Activated T-helper 2 cell treated with anti-CD3 and anti-CD28 coated beads, Interferon-gamma antibody, Interleukin-2, Interleukin-4, amounts not matched to agents 10 μg/mL and 5 μg/mL and 100 μg/mL, durations not matched to agents 14 hours and 24 hours and 36 hours (primary cell): ENCODE measurements at regions of chr13 and their contacts with region 1.

Region 1: GRCh38 chr13:100363874-100364273 is 224.7 kb downstream of the GGACT start:
- DNase-seq: no peak
- H3K4me3 Mint-ChIP-seq: no peak overlapping the region
- H3K27ac Mint-ChIP-seq: no peak overlapping the region
- H3K4me1 Mint-ChIP-seq: peaks cover 14% of the 10 kb centered on the region
- H3K27me3 Mint-ChIP-seq: no peaks in the 10 kb centered on the region

Region 2: DNA sequence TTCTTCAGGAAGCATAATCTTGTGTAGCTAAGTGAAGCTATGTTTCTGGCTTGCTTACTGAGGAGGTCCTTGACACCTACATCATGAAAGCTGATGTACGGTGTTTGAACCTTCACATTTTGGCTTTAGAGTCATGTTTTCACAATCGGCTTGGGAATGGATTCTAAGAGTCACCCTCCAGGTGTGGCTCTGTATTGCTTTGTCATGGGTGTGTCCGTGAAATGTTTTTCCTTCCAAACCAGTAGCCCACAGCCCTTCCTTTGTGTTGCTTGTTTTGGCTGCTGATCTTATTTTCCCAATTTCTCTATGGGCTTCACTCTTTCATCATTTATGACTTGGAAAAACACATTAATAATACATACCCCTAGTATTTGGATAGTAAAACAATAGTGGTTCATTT is 15.9 kb before region 1 on chr13:
- intact Hi-C with region 1: no loop called
- DNase-seq: no peak
- H3K4me3 Mint-ChIP-seq: no peak overlapping the region
- H3K27ac Mint-ChIP-seq: no peak overlapping the region
- H3K4me1 Mint-ChIP-seq: no peaks in the 10 kb centered on the region
- H3K27me3 Mint-ChIP-seq: no peaks in the 10 kb centered on the region

Region 3: DNA sequence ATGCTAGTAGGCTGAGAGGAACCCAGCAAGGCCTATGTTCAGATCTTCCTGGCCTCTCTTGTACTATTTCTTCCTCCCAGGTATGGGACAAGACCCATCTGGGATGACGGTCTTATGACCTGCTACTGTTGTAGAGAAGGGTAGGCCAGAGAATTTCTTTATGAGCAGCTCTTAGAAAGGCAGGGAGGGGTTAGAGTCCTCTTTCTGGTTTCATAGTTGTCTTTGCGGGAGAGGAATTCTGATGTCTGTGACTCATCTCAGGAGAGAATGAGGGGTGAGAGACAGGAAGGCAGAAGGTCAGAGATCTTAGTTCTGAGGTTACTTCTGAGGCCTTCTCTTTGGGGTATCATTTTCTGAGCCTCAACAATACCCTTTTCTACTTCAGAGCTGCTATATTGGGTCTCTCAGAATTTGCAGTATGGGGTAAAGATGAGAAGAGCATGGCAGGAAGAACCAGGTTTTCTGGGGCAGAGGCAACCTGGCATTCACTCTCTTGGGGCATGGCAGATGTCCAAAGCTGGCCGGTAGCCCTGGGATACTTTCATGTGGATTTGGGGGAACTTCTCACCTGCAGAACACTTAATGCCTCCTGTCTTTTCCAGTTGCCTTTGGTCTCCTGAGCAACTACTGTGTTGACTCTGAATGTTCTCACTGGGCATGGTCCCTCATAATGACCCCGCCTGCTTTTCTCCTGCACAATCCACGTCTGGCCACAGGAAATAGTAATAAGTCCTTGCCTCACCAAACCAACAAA is 70.3 kb after region 1 on chr13:
- intact Hi-C with region 1: loop called (anchors 5 kb)
- DNase-seq: no peak
- H3K4me3 Mint-ChIP-seq: no peak overlapping the region
- H3K27ac Mint-ChIP-seq: peak overlapping the region; percentile 35
- H3K4me1 Mint-ChIP-seq: peaks cover 36% of the 10 kb centered on the region
- H3K27me3 Mint-ChIP-seq: no peaks in the 10 kb centered on the region